Breast epithelium (tissue), 4 donors: ENCODE measurements at regions of chr1 and their contacts with region 1.

Region 1: GRCh38 chr1:87632232-87632631 is 303.6 kb downstream of the LMO4 start:
- DNase-seq: no peak
- H3K4me3 ChIP-seq: no peak overlapping the region
- H3K27ac ChIP-seq: no peak overlapping the region
- H3K4me1 ChIP-seq: no peaks in the 10 kb centered on the region
- H3K27me3 ChIP-seq: no peaks in the 10 kb centered on the region
- CTCF ChIP-seq: no peak
- POLR2A ChIP-seq: no peak

Region 2: DNA sequence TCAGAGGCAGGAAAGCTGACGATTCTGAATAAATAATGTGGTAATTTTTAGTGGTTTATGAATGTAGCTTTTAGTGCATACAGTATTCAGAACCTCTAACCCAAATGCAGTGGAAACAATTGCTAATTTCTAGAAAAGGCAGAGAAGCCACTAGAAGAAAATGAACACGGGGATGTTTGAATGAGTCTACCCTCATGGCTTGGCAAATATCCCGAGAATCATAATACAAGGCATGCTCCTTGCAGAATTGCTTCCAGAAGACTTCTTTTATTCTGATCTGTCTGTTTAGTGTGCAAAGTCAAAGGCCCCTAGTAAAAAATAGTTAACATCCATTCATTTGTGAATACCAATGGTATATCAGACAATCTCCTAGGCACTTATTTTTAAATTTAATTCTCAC is 56.7 kb before region 1 on chr1:
- intact Hi-C with region 1: no loop called
- DNase-seq: no peak
- H3K4me3 ChIP-seq: no peak overlapping the region
- H3K27ac ChIP-seq: no peak overlapping the region
- H3K4me1 ChIP-seq: no peaks in the 10 kb centered on the region
- H3K27me3 ChIP-seq: no peaks in the 10 kb centered on the region
- CTCF ChIP-seq: no peak
- POLR2A ChIP-seq: no peak

Region 3: DNA sequence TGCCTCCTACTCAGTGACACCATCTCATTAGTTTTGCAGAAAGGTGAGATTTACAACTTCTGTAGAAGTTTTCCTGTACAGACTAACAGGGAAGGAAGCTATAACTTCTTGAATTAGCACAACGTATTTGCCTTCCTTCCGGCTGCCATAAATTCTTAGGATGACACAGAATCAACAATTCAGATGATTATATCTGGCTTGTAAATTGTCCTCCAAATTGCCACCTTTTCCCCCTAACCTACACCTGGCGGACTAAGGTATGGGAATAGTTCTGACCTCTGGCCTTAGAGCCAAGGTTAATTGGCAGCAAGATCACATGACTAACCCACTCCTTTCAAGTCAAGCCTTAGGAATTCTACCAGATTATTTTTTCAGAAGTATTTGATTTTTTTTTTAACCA is 19.3 kb before region 1 on chr1:
- intact Hi-C with region 1: no loop called
- DNase-seq: no peak
- H3K4me3 ChIP-seq: no peak overlapping the region
- H3K27ac ChIP-seq: no peak overlapping the region
- H3K4me1 ChIP-seq: no peaks in the 10 kb centered on the region
- H3K27me3 ChIP-seq: no peaks in the 10 kb centered on the region
- CTCF ChIP-seq: no peak
- POLR2A ChIP-seq: no peak

Region 4: DNA sequence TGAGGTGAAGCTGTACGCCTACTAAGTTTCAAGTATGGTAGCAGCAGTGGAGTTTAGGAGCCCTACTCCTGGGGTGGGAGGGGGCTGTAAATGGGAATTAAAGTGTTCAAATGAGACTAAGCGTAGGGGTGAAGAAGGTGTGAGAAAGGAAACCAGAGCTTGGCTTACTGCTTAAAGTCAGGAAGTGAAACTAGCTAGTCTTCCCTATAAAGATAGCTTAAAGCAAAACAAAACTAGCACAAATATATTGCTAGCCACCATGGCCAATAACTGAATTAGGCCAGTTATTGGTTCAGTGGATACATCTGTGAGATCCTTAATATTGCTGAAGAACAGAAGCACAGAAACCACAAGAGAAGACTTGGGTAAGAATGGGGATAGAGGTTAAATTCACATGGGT is 559.7 kb after region 1 on chr1:
- intact Hi-C with region 1: loop called (anchors 5 kb)
- DNase-seq: no peak
- H3K4me3 ChIP-seq: no peak overlapping the region
- H3K27ac ChIP-seq: no peak overlapping the region
- H3K4me1 ChIP-seq: no peaks in the 10 kb centered on the region
- H3K27me3 ChIP-seq: no peaks in the 10 kb centered on the region
- CTCF ChIP-seq: no peak
- POLR2A ChIP-seq: no peak